CD8-positive, alpha-beta memory T cell (primary cell): ENCODE measurements at regions of chr1 and their contacts with region 1.

Region 1: GRCh38 chr1:206734499-206735142 is 36.0 kb upstream of the IL19 start:
- DNase-seq: peak; percentile 66 to 80 (median 74)
- H3K4me3 ChIP-seq: no peak overlapping the region
- H3K4me3 Mint-ChIP-seq: peak overlapping the region in 6 of 7 donors; percentile 7 to 79 (median 54)
- H3K27ac ChIP-seq: no peak overlapping the region
- H3K27ac Mint-ChIP-seq: peak overlapping the region; percentile 86 to 98 (median 92)
- H3K4me1 ChIP-seq: peaks cover 55% of the 10 kb centered on the region
- H3K4me1 Mint-ChIP-seq: peaks cover 60 to 62% (median 62%) of the 10 kb centered on the region in 3 donors
- H3K27me3 ChIP-seq: no peaks in the 10 kb centered on the region
- H3K27me3 Mint-ChIP-seq: no peaks in the 10 kb centered on the region

Region 2: DNA sequence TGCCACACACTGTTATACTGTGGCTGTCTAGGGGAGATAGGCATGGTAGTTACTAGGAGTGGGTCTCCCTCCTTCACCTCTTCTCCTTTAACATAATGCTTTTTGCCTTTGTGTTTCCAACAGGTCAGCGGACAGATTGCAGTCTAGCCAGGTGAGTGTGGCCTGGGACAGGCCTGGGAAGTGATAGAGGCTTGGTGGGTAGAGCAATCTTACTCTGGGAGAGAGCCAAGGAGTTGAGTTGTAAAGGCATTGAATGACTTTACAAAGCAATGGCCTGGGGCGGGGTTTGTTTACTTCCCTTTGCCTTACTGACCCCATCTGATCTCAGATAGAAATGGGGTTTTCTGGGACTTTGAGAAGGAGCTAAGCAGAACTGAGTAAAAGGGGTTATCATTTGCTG is 315.4 kb before region 1 on chr1:
- CTCF ChIA-PET with region 1: no interaction called
- POLR2A ChIA-PET with region 1: no interaction called
- DNase-seq: no peak
- H3K4me3 ChIP-seq: no peak overlapping the region
- H3K4me3 Mint-ChIP-seq: no peak overlapping the region
- H3K27ac ChIP-seq: no peak overlapping the region
- H3K27ac Mint-ChIP-seq: peak overlapping the region in 1 of 8 donors; percentile 42
- H3K4me1 ChIP-seq: no peaks in the 10 kb centered on the region
- H3K4me1 Mint-ChIP-seq: no peaks in the 10 kb centered on the region
- H3K27me3 ChIP-seq: no peaks in the 10 kb centered on the region
- H3K27me3 Mint-ChIP-seq: no peaks in the 10 kb centered on the region

Region 3: DNA sequence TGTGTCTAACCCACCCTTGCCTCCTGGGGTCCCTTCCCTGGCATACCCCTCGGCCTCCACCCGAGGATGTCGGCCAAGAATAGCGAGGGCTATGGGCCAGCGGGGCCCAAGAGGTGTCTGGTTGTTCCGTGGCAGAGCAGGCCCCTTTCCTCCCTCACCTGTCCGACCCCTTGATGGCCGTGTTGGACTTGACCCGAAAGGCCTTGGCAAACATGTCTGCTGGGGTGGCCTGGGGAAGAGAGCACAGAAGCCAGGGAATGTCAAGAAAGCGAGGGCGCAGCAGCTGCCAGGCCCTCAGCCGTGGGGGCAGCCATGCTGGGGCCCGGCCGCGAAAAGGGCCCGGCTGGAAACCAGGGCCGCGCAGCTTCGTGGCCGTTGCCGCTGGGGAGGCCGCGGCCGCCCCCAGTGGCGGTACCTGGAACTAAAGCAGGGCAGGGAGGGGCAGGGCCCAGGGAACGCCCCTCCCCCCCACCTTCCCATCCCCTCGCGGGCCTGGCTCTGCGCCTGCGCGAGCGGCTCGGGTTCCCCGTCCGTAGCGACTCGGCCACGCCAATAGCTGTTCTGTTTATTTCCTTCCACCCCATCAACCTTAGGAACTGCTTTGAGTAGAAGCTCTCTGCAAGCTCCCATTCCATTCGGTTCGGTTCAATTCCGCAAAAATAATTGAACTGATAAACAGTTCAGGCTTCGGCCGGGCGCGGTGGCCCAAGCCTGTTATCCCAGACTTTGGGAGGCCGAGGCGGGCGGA is 122.3 kb before region 1 on chr1 and contains the start of gene EIF2D:
- CTCF ChIA-PET with region 1: no interaction called
- POLR2A ChIA-PET with region 1: no interaction called
- DNase-seq: peak; percentile 91 to 95 (median 92)
- H3K4me3 ChIP-seq: peak within 1 kb of the TSS; percentile 98
- H3K4me3 Mint-ChIP-seq: peak within 1 kb of the TSS; percentile 88 to 95 (median 92)
- H3K27ac ChIP-seq: peak within 1 kb of the TSS; percentile 91
- H3K27ac Mint-ChIP-seq: peak within 1 kb of the TSS; percentile 63 to 97 (median 96)
- H3K4me1 ChIP-seq: peaks cover 9% of the 10 kb centered on the region
- H3K4me1 Mint-ChIP-seq: peaks cover 14 to 26% (median 21%) of the 10 kb centered on the region in 3 donors
- H3K27me3 ChIP-seq: no peaks in the 10 kb centered on the region
- H3K27me3 Mint-ChIP-seq: no peaks in the 10 kb centered on the region
- total RNA-seq, gene EIF2D: 82.7 to 88.7 TPM

Region 4: GRCh38 chr1:206744683-206745082 is 10.1 kb after region 1 on chr1:
- CTCF ChIA-PET with region 1: interaction called, 13 read pairs
- POLR2A ChIA-PET with region 1: interaction called, 3 read pairs
- DNase-seq: no peak
- H3K4me3 ChIP-seq: no peak overlapping the region
- H3K4me3 Mint-ChIP-seq: peak overlapping the region in 4 of 7 donors; percentile 2 to 57 (median 34)
- H3K27ac ChIP-seq: no peak overlapping the region
- H3K27ac Mint-ChIP-seq: peak overlapping the region in 7 of 8 donors; percentile 18 to 85 (median 40)
- H3K4me1 ChIP-seq: peaks cover 28% of the 10 kb centered on the region
- H3K4me1 Mint-ChIP-seq: peaks cover 30 to 70% (median 53%) of the 10 kb centered on the region in 3 donors
- H3K27me3 ChIP-seq: no peaks in the 10 kb centered on the region
- H3K27me3 Mint-ChIP-seq: no peaks in the 10 kb centered on the region

Region 5: DNA sequence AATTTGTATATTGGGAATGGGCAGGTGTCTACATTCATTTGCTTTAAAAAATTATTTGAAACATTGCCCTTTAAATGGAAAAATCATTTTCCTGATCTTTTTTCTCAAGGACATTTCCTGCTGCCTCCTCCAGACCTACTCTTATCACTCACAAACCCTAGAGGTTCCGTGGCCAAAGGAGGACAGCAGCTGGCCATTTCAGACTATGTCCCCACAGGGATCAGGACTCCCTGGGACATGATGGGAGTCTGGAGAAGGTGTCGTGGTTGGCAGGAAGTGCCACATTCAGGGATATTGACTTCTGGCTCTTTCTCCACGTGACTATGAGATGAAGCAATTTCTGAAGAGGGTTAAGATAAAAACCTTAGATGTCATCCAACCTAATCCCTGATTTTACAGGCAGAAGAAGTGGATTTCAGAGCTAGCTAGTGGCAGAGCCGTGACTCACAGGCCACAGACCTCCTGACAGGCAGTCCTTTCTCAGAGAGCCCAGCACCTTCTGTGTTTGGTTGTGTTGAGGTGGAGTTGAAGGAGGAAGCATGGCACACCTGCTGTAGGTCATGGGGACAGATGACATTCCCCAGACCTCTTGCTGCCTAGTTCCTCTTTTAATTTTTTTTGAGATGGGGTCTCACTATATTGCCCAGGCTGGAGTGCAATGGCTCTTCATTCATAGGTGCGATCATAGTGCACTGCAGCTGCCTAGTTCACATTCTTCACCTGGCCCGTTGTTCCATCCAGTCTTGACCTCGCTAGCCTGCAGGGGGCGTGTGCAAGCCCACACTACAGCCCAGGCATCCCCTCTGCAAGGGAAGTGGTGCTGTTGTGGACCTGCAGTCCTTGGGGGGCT is 63.1 kb after region 1 on chr1:
- CTCF ChIA-PET with region 1: interaction called, 232 read pairs
- POLR2A ChIA-PET with region 1: interaction called, 13 read pairs
- DNase-seq: peak in 2 of 5 donors; percentile 7 to 21
- H3K4me3 ChIP-seq: no peak overlapping the region
- H3K4me3 Mint-ChIP-seq: peak overlapping the region in 1 of 7 donors; percentile 19
- H3K27ac ChIP-seq: no peak overlapping the region
- H3K27ac Mint-ChIP-seq: peak overlapping the region in 6 of 8 donors; percentile 22 to 92 (median 52)
- H3K4me1 ChIP-seq: peaks cover 42% of the 10 kb centered on the region
- H3K4me1 Mint-ChIP-seq: peaks cover 36 to 62% (median 54%) of the 10 kb centered on the region in 3 donors
- H3K27me3 ChIP-seq: no peaks in the 10 kb centered on the region
- H3K27me3 Mint-ChIP-seq: peaks cover 0 to 2% of the 10 kb centered on the region in 2 donors

Region 6: GRCh38 chr1:206816390-206817287 is 82.0 kb after region 1 on chr1:
- CTCF ChIA-PET with region 1: interaction called, 232 read pairs
- POLR2A ChIA-PET with region 1: no interaction called
- DNase-seq: peak in 2 of 5 donors; percentile 30 to 49
- H3K4me3 ChIP-seq: no peak overlapping the region
- H3K4me3 Mint-ChIP-seq: peak overlapping the region in 6 of 7 donors; percentile 42 to 60 (median 54)
- H3K27ac ChIP-seq: peak overlapping the region; percentile 22
- H3K27ac Mint-ChIP-seq: peak overlapping the region; percentile 76 to 96 (median 86)
- H3K4me1 ChIP-seq: peaks cover 12% of the 10 kb centered on the region
- H3K4me1 Mint-ChIP-seq: peaks cover 19 to 28% (median 24%) of the 10 kb centered on the region in 3 donors
- H3K27me3 ChIP-seq: no peaks in the 10 kb centered on the region
- H3K27me3 Mint-ChIP-seq: no peaks in the 10 kb centered on the region

Region 7: DNA sequence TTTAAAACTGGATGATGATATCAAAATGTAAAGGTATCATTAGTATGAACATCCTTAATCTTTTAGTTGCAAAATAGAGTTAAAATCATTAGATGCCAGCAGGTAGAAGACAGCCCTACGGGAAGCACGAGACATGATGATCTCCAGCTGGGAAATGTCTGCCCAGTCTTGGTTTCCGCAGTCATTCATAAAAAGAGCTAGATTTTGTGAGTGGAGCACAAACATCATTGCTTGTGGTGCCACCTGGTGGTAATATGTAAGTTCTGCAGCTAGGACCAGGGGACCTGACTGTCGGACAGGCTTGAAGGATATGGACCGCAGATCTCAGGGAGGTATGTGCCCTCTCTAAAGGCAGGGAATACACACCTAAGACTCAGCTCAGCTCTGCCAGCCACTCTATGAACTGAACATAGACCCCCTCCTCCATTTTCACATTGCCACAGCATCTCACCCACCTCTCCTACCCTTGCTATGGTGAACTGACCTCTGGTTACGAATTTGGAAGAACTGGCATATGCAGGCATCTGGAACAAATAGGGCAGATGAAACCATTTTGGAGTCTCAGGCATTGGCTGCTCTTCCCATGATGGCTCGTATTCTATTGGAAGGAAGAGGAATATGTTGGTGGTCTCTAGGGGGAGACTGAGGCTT is 177.9 kb after region 1 on chr1:
- CTCF ChIA-PET with region 1: interaction called, 64 read pairs
- POLR2A ChIA-PET with region 1: interaction called, 6 read pairs
- DNase-seq: peak in 4 of 5 donors; percentile 51 to 74 (median 67)
- H3K4me3 ChIP-seq: no peak overlapping the region
- H3K4me3 Mint-ChIP-seq: peak overlapping the region; percentile 21 to 64 (median 43)
- H3K27ac ChIP-seq: no peak overlapping the region
- H3K27ac Mint-ChIP-seq: peak overlapping the region in 6 of 8 donors; percentile 69 to 95 (median 90)
- H3K4me1 ChIP-seq: peaks cover 91% of the 10 kb centered on the region
- H3K4me1 Mint-ChIP-seq: peaks cover 85 to 95% (median 95%) of the 10 kb centered on the region in 3 donors
- H3K27me3 ChIP-seq: no peaks in the 10 kb centered on the region
- H3K27me3 Mint-ChIP-seq: peaks cover 0 to 1% of the 10 kb centered on the region in 2 donors

Region 8: DNA sequence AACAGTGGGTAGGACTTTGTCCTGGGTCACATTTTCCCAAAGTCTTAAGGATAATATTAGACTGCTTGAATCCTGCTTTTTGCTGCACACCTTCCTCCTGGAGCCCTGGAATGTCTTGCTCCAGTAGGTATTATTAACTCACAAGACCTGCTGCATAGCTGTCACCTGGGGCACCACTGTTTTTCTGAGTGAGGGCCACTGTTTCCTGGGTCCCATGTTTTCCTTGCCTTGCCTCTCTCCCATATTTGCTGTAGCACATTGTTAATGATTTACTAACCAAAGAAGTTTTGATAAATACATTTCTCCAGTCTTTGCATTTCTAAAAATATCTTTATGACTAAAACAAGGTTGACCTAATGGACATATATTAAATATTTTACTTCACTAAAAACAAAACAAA is 258.2 kb after region 1 on chr1:
- CTCF ChIA-PET with region 1: no interaction called
- POLR2A ChIA-PET with region 1: no interaction called
- DNase-seq: no peak
- H3K4me3 ChIP-seq: no peak overlapping the region
- H3K4me3 Mint-ChIP-seq: no peak overlapping the region
- H3K27ac ChIP-seq: no peak overlapping the region
- H3K27ac Mint-ChIP-seq: no peak overlapping the region
- H3K4me1 ChIP-seq: no peaks in the 10 kb centered on the region
- H3K4me1 Mint-ChIP-seq: no peaks in the 10 kb centered on the region
- H3K27me3 ChIP-seq: no peaks in the 10 kb centered on the region
- H3K27me3 Mint-ChIP-seq: peaks cover 16 to 52% of the 10 kb centered on the region in 2 donors